A673 (cell line): ENCODE measurements at regions of chr3 and their contacts with region 1.

Region 1: GRCh38 chr3:43503067-43503728 is 118.6 kb downstream of the ANO10 start:
- DNase-seq: peak; percentile 15
- H3K4me3 ChIP-seq: no peak overlapping the region
- H3K27ac ChIP-seq: no peak overlapping the region
- H3K4me1 ChIP-seq: no peaks in the 10 kb centered on the region
- H3K27me3 ChIP-seq: no peaks in the 10 kb centered on the region
- CTCF ChIP-seq: peak; percentile 52

Region 2: DNA sequence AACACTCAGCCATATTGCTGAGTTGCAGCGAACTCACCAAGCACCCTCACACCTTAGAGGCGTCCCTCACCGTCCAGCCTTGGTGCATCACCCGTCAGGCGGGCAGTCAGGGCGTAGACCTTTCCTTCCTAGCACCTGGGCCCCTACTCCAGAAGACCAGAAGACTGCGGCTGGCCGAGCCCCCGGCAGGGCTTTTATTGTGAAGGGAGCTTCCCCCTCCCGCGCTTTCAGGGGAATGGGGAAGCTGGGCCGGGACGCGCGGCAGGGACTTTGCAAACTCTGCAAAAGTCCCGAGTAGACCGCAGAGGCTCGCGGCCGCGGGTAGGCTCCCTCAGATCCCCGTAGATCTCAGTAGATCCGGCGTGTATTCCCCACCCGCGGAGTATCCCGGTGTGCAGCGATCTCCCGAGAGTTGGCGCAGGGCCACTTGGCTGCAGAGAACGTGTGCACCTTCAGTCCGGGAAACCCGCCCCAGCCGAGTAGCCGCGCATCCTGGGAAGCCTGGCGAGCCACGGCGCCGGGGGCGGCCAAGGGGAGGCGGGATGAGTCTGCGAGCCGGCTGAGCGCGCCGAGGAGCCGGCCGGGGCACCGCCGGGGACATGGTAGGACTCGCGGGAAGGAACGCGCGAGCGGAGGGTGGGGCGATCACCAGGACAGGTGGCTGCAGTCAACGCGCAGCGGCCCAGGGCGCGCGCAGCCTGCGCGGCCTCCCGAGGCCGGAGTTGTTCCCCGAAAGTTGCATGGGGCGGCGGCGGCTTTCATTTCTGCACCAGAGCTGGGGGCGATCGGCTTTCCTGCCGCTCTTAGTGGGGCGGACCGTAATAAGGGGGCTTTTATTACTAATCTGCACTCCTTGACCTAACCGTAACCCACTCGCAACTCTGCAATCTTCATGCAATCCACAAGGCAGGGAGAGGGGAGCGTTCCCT is 523.9 kb before region 1 on chr3 and contains the start of gene GASK1A:
- CTCF ChIA-PET with region 1: no interaction called
- POLR2A ChIA-PET with region 1: no interaction called
- intact Hi-C with region 1: loop called (anchors 5 kb)
- DNase-seq: peak; percentile 9
- H3K4me3 ChIP-seq: peak within 1 kb of the TSS; percentile 32
- H3K27ac ChIP-seq: no peak within 1 kb of the TSS
- H3K4me1 ChIP-seq: no peaks in the 10 kb centered on the region
- H3K27me3 ChIP-seq: peaks cover 9% of the 10 kb centered on the region
- CTCF ChIP-seq: no peak
- total RNA-seq, gene GASK1A: 1.4 and 1.9 TPM in 2 replicates

Region 3: GRCh38 chr3:43155464-43156121 is 347.6 kb before region 1 on chr3:
- CTCF ChIA-PET with region 1: no interaction called
- POLR2A ChIA-PET with region 1: no interaction called
- intact Hi-C with region 1: loop called (anchors 10 kb)
- DNase-seq: peak; percentile 68
- H3K4me3 ChIP-seq: no peak overlapping the region
- H3K27ac ChIP-seq: no peak overlapping the region
- H3K4me1 ChIP-seq: no peaks in the 10 kb centered on the region
- H3K27me3 ChIP-seq: no peaks in the 10 kb centered on the region
- CTCF ChIP-seq: peak; percentile 51

Region 4: GRCh38 chr3:43215663-43216275 is 287.4 kb before region 1 on chr3:
- CTCF ChIA-PET with region 1: no interaction called
- POLR2A ChIA-PET with region 1: no interaction called
- intact Hi-C with region 1: loop called (anchors 10 kb)
- DNase-seq: no peak
- H3K4me3 ChIP-seq: no peak overlapping the region
- H3K27ac ChIP-seq: no peak overlapping the region
- H3K4me1 ChIP-seq: no peaks in the 10 kb centered on the region
- H3K27me3 ChIP-seq: no peaks in the 10 kb centered on the region
- CTCF ChIP-seq: peak; percentile 27; the same call in 1 of the 2 replicates

Region 5: GRCh38 chr3:43770426-43771103 is 267.4 kb after region 1 on chr3:
- CTCF ChIA-PET with region 1: no interaction called
- POLR2A ChIA-PET with region 1: no interaction called
- intact Hi-C with region 1: no loop called
- DNase-seq: no peak
- H3K4me3 ChIP-seq: no peak overlapping the region
- H3K27ac ChIP-seq: no peak overlapping the region
- H3K4me1 ChIP-seq: peaks cover 6% of the 10 kb centered on the region
- H3K27me3 ChIP-seq: no peaks in the 10 kb centered on the region
- CTCF ChIP-seq: no peak

Region 6: GRCh38 chr3:44104668-44105321 is 601.6 kb after region 1 on chr3:
- CTCF ChIA-PET with region 1: no interaction called
- POLR2A ChIA-PET with region 1: no interaction called
- intact Hi-C with region 1: no loop called
- DNase-seq: no peak
- H3K4me3 ChIP-seq: no peak overlapping the region
- H3K27ac ChIP-seq: no peak overlapping the region
- H3K4me1 ChIP-seq: no peaks in the 10 kb centered on the region
- H3K27me3 ChIP-seq: no peaks in the 10 kb centered on the region
- CTCF ChIP-seq: no peak